CD8-positive, alpha-beta T cell (primary cell): ENCODE measurements at regions of chr4 and their contacts with region 1.

Region 1: GRCh38 chr4:147799986-147800555 is 68.2 kb downstream of the ARHGAP10 start:
- DNase-seq: peak; percentile 30 to 93 (median 59)
- ATAC-seq: peak; percentile 91
- H3K4me3 ChIP-seq: no peak overlapping the region
- H3K4me3 Mint-ChIP-seq: peak overlapping the region; percentile 36
- H3K27ac ChIP-seq: no peak overlapping the region
- H3K27ac Mint-ChIP-seq: peak overlapping the region; percentile 47
- H3K4me1 ChIP-seq: peaks cover 15% of the 10 kb centered on the region
- H3K4me1 Mint-ChIP-seq: peaks cover 24% of the 10 kb centered on the region
- H3K27me3 ChIP-seq: no peaks in the 10 kb centered on the region
- H3K27me3 Mint-ChIP-seq: no peaks in the 10 kb centered on the region
- CTCF ChIP-seq: no peak

Region 2: GRCh38 chr4:147610686-147611085 is 189.4 kb before region 1 on chr4:
- CTCF ChIA-PET with region 1: no interaction called
- POLR2A ChIA-PET with region 1: no interaction called
- intact Hi-C with region 1: loop called in 1 of 2 experiments (anchors 5 kb)
- DNase-seq: no peak
- ATAC-seq: no peak
- H3K4me3 ChIP-seq: no peak overlapping the region
- H3K4me3 Mint-ChIP-seq: no peak overlapping the region
- H3K27ac ChIP-seq: no peak overlapping the region
- H3K27ac Mint-ChIP-seq: no peak overlapping the region
- H3K4me1 ChIP-seq: no peaks in the 10 kb centered on the region
- H3K4me1 Mint-ChIP-seq: no peaks in the 10 kb centered on the region
- H3K27me3 ChIP-seq: peaks cover 2 to 5% of the 10 kb centered on the region in 2 experiments
- H3K27me3 Mint-ChIP-seq: peaks cover 8% of the 10 kb centered on the region
- CTCF ChIP-seq: no peak